ENCODE measurements at regions of chr21 and their contacts with region 1.

Region 1: DNA sequence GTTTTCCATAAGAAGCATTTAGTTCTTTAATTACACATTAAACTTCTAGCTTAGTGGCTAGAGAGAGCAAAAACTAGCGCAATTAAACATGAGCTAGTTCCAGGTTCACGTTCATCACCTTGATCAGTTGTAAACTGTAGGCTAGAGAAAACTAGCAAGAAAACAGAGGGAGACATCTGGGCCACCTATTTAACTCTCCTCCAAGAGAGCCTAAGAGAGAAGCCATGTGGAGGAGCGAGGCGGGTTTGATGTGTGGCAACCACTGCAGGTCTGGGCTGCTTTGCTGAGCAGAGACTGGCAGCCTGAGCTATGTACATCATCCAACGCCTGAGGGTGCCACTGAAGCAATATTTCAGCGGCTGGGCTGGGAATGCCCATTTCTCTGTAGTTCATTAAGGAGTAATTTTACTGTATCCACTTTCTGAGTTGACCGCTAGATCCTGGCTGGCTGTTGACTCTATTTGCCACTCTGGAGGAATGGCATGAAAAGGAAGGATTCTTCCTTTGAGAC is 252.9 kb downstream of the DYRK1A start:
- DNase-seq: peak; percentile 84
- H3K4me3 Mint-ChIP-seq: no peak overlapping the region
- H3K27ac Mint-ChIP-seq: no peak overlapping the region
- H3K4me1 Mint-ChIP-seq: peaks cover 9% of the 10 kb centered on the region
- H3K27me3 Mint-ChIP-seq: no peaks in the 10 kb centered on the region
- CTCF ChIP-seq: peak; percentile 13

Region 2: GRCh38 chr21:37658817-37659458 is 39.4 kb after region 1 on chr21:
- CTCF ChIA-PET with region 1: interaction called, 6 read pairs
- POLR2A ChIA-PET with region 1: interaction called, 3 read pairs
- intact Hi-C with region 1: loop called (anchors 5 kb)
- DNase-seq: peak; percentile 83
- H3K4me3 Mint-ChIP-seq: peak overlapping the region; percentile 6
- H3K27ac Mint-ChIP-seq: peak overlapping the region; percentile 75
- H3K4me1 Mint-ChIP-seq: peaks cover 29% of the 10 kb centered on the region
- H3K27me3 Mint-ChIP-seq: no peaks in the 10 kb centered on the region
- CTCF ChIP-seq: peak; percentile 26

Measured in MCF 10A (cell line).